ENCODE measurements at regions of chr6 and their contacts with region 1.

Region 1: GRCh38 chr6:164477101-164477500 is 832.3 kb downstream of the C6orf118 start:
- DNase-seq: no peak
- ATAC-seq: no peak
- H3K4me3 ChIP-seq: no peak overlapping the region
- H3K27ac ChIP-seq: no peak overlapping the region
- H3K4me1 ChIP-seq: no peaks in the 10 kb centered on the region
- H3K27me3 ChIP-seq: no peaks in the 10 kb centered on the region
- CTCF ChIP-seq: no peak
- POLR2A ChIP-seq: no peak

Region 2: GRCh38 chr6:164409309-164410009 is 67.6 kb before region 1 on chr6:
- intact Hi-C with region 1: no loop called
- DNase-seq: no peak
- ATAC-seq: peak; percentile 32 to 72 (median 59)
- H3K4me3 ChIP-seq: no peak overlapping the region
- H3K27ac ChIP-seq: no peak overlapping the region
- H3K4me1 ChIP-seq: peaks cover 0 to 13% (median 3%) of the 10 kb centered on the region in 12 donors
- H3K27me3 ChIP-seq: no peaks in the 10 kb centered on the region
- CTCF ChIP-seq: no peak
- POLR2A ChIP-seq: no peak

Region 3: DNA sequence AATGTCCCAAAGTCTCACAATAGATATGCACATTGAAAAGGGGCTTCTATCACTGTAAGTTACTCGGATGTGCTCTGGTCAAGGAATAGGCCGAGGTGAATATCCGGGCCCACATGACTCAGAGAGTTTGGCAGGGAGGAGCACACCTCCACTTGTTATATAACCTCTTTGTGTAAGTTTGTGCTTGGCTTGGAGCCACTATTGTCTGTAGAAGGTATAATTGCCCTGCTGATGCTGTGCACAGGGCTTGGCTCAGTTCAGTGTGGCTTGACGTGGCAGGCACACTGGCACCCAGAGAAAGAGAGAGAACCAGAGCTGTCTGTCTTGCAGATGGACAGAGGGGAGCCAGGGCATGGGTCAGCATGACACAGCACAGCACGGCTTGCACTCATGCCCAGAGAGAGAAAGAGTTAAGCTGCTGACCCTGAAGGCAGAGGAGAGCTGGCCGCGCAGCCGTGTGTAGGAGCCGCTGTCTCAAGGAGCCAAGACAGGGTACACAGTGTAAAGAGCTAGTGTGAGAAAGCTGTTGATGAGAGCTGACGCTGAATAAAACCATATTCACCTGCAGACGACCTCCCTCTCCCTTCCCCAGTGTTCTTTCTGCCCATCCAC is 349.8 kb after region 1 on chr6:
- intact Hi-C with region 1: no loop called
- DNase-seq: no peak
- ATAC-seq: no peak
- H3K4me3 ChIP-seq: no peak overlapping the region
- H3K27ac ChIP-seq: no peak overlapping the region
- H3K4me1 ChIP-seq: no peaks in the 10 kb centered on the region
- H3K27me3 ChIP-seq: no peaks in the 10 kb centered on the region
- CTCF ChIP-seq: no peak
- POLR2A ChIP-seq: no peak

Region 4: GRCh38 chr6:165178056-165178455 is 701.0 kb after region 1 on chr6:
- intact Hi-C with region 1: loop called in 1 of 10 experiments (anchors 10 kb)
- DNase-seq: no peak
- ATAC-seq: no peak
- H3K4me3 ChIP-seq: no peak overlapping the region
- H3K27ac ChIP-seq: no peak overlapping the region
- H3K4me1 ChIP-seq: no peaks in the 10 kb centered on the region
- H3K27me3 ChIP-seq: no peaks in the 10 kb centered on the region
- CTCF ChIP-seq: no peak
- POLR2A ChIP-seq: no peak